Naive thymus-derived CD4-positive, alpha-beta T cell (primary cell): ENCODE measurements at regions of chr2 and their contacts with region 1.

Region 1: DNA sequence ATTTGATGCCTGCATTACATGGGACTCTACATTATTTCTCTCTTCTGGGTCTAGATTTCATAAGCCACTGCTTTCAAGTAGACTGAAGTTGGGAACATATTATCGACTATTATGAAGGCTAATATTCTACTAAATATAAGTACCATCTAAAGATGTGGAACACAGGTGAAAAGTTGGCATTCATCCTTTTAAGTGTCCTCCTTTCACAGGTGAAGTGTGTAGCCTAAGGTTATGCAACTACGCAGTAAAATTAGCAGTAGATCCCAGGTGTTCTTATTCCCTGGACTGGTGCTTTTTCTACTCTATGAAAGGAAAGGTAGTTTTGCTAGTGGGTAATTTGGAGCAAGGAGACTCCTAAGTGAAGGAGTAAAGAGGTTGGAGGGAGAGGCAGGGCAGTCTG is 88.2 kb upstream of the DPP10 start:
- DNase-seq: no peak
- ATAC-seq: no peak
- H3K4me3 ChIP-seq: no peak overlapping the region
- H3K4me3 Mint-ChIP-seq: no peak overlapping the region
- H3K27ac ChIP-seq: no peak overlapping the region
- H3K27ac Mint-ChIP-seq: no peak overlapping the region
- H3K4me1 ChIP-seq: no peaks in the 10 kb centered on the region
- H3K4me1 Mint-ChIP-seq: no peaks in the 10 kb centered on the region
- H3K27me3 ChIP-seq: no peaks in the 10 kb centered on the region
- H3K27me3 Mint-ChIP-seq: peaks cover 0 to 5% (median 0%) of the 10 kb centered on the region in 5 donors

Region 2: DNA sequence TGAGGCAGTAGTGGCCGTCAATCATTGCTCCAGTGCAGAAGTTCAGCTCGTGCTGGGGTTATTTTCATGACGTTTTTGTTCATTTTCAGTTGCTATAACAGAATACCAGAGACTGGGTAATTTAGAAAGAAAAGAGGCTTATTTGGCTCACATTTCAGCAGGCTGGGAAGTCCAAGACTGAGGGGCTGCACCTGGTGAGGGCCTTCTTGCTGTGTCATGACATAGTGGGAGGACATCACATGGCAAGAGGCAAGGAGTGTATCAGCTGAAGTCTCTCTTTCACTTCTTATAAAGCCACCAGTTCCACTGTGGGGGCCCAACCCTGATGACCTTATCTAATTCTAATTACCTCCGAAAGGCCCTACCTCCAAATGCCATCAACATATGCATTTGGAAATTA is 30.2 kb after region 1 on chr2:
- CTCF ChIA-PET with region 1: no interaction called
- POLR2A ChIA-PET with region 1: no interaction called
- intact Hi-C with region 1: loop called in 1 of 2 experiments (anchors 1 kb)
- DNase-seq: no peak
- ATAC-seq: no peak
- H3K4me3 ChIP-seq: no peak overlapping the region
- H3K4me3 Mint-ChIP-seq: no peak overlapping the region
- H3K27ac ChIP-seq: no peak overlapping the region
- H3K27ac Mint-ChIP-seq: no peak overlapping the region
- H3K4me1 ChIP-seq: no peaks in the 10 kb centered on the region
- H3K4me1 Mint-ChIP-seq: no peaks in the 10 kb centered on the region
- H3K27me3 ChIP-seq: no peaks in the 10 kb centered on the region
- H3K27me3 Mint-ChIP-seq: peaks cover 0 to 24% (median 3%) of the 10 kb centered on the region in 5 donors

Region 3: DNA sequence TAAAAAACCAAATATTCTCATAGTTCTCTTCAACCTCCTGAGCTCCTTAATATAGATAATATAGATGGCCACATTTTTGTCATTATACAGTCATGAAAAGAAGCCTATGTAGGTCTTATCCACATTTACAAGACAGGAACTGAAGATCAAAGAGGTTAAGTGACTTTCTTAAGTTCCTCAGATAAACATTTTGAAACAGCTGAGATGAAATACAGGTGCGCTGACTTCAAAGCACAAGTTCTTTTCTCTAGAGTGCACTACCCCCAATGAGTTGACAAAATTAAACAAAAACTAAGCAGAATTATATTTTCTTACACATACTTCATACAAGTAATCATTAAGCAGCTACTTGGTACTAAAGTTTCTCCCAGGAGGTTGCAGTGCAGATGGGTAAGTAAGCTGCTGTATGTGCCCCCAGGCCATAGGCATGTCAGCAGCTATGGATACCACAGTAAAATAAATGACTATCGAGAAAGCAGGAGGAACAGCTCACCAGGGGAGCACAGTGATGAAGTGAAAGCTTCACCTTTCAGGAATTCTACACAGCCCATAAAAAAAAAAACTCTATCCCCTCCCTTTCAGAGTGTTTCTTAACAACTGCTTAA is 288.1 kb after region 1 on chr2:
- CTCF ChIA-PET with region 1: no interaction called
- POLR2A ChIA-PET with region 1: no interaction called
- intact Hi-C with region 1: no loop called
- DNase-seq: peak in 4 of 9 donors; percentile 5 to 24 (median 14)
- ATAC-seq: no peak
- H3K4me3 ChIP-seq: no peak overlapping the region
- H3K4me3 Mint-ChIP-seq: peak overlapping the region in 4 of 10 donors; percentile 5 to 58 (median 20)
- H3K27ac ChIP-seq: no peak overlapping the region
- H3K27ac Mint-ChIP-seq: peak overlapping the region in 2 of 9 donors; percentile 9 to 13
- H3K4me1 ChIP-seq: no peaks in the 10 kb centered on the region
- H3K4me1 Mint-ChIP-seq: peaks cover 0 to 15% (median 0%) of the 10 kb centered on the region in 7 donors
- H3K27me3 ChIP-seq: no peaks in the 10 kb centered on the region
- H3K27me3 Mint-ChIP-seq: peaks cover 0 to 7% (median 0%) of the 10 kb centered on the region in 5 donors